Ascending aorta (tissue), 2 donors: ENCODE measurements at regions of chr10 and their contacts with region 1.

Region 1: DNA sequence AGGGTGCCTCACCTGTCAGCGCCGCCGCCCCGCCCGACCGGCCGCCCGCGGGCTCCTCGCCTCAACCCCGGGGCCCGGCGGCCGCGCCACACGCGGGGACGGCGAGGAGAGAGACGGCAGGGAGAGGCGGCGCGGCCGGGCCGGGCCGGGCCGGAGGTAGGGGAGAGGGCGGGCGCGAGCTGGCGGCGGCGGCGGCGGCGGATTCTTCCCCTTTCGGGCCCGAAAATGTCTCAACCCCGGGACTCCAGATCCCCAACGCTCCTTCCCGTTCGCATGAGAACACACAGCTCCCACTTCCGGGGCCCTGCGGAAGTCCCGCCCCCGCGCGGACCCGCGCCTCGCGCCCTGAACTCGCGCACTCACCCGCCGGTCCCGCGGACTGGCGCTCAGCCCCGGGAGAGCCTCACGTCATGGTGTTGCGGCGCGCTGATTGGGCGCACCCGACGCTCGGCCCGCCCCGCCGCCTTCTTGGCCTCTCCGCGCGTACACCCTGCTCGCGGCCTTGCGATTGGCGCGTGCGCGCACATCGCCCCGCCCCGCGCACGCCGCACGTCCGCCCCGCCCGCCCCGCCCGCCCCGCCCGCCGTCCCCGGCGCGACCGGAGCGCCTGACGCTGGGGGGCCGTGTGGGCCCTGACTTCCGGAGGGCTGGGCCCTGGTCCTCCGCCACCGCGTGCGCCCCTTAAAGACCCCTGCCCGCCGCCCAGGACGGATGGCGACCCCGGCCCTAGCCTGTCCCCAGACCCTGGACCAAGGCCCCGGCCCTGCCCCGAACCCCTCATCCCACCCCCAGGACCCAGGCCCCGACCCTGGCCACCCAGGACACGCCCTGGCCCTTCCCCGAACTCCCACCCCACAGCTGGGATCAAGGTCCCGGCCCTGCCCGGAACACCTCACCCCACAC is at the start of gene LARP4B:
- DNase-seq: peak; percentile 87 to 98
- H3K4me3 ChIP-seq: peak within 1 kb of the TSS; percentile 91 to 98
- H3K27ac ChIP-seq: peak within 1 kb of the TSS; percentile 94 to 99
- H3K4me1 ChIP-seq: peaks cover 11 to 26% of the 10 kb centered on the region in 2 donors
- H3K27me3 ChIP-seq: no peaks in the 10 kb centered on the region
- CTCF ChIP-seq: peak in 1 of 3 experiments; percentile 6
- total RNA-seq, gene LARP4B: 31.6 TPM

Region 2: DNA sequence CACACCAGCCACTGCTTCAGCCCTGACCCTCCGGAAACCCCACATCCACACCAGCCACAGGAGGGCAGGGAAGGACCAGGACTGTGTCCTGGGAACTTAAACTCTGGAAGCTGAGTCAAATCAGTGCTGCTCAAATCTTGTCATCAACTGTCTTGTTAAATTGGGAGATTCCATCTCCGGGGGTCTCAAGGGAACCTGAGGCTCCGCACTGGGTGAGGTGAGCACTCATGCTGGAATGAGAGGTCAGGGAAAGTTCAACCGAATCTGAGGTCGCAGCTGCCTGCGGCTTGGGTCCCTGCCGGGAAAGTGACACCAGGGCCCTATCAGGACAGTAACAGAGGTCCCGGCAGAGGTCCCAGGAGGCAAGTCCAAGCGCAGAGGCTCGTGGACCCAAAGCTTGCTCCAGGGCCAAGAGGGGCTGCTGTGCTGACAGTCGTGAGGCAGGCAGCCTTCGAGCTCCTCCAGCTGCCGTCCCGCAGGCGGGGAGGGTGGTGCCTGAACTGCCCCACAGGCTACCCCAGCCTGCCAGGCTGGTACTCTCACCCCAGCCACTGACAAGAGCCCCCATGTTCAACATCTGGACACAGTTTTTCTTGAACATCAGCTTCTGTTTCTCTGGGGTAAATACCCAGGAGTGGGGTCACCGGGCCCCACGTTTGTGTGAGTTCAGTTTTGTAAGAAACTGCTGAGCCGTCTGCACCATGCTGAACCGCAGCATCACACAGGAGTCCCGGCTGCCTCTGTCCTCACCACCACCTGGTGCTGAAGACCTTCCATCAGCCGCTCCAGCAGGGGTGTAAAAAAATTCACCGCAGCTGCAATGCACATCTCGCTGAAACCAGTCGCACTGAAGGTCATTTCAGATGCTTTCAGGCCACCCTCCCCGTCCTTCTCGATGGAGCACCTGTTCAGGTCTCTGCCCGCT is 343.2 kb before region 1 on chr10:
- intact Hi-C with region 1: no loop called
- DNase-seq: peak in 1 of 2 donors; percentile 41
- H3K4me3 ChIP-seq: no peak overlapping the region
- H3K27ac ChIP-seq: no peak overlapping the region
- H3K4me1 ChIP-seq: peaks cover 0 to 11% of the 10 kb centered on the region in 2 donors
- H3K27me3 ChIP-seq: no peaks in the 10 kb centered on the region
- CTCF ChIP-seq: peak in 1 of 3 experiments; percentile 33

Region 3: GRCh38 chr10:689433-690371 is 242.0 kb before region 1 on chr10 and contains the start of gene DIP2C:
- intact Hi-C with region 1: loop called (anchors 1 kb)
- DNase-seq: peak in 1 of 2 donors; percentile 83
- H3K4me3 ChIP-seq: peak within 1 kb of the TSS; percentile 67 to 89
- H3K27ac ChIP-seq: peak within 1 kb of the TSS; percentile 89 to 91
- H3K4me1 ChIP-seq: peaks cover 6 to 11% of the 10 kb centered on the region in 2 donors
- H3K27me3 ChIP-seq: no peaks in the 10 kb centered on the region
- CTCF ChIP-seq: no peak
- total RNA-seq, gene DIP2C: 14.7 TPM

Region 4: DNA sequence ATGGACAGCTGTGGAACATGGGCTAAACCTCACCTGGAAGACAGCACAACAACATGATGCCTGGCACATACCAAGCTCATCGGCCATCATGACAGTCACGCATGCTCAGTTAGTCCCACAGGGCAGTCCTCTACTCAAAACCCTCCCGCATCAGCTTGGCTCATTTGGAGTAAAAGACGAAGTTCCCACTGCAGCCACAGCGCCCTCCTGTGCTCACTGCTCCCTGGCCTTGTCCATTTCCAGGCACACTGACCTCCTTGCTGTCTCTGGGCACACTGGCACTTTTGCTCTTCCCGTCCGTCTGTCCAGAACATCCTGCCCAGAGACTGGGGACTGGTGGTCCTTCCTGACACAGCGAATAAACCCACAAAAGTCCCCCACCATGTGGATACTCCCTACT is 66.4 kb before region 1 on chr10:
- intact Hi-C with region 1: no loop called
- DNase-seq: no peak
- H3K4me3 ChIP-seq: no peak overlapping the region
- H3K27ac ChIP-seq: no peak overlapping the region
- H3K4me1 ChIP-seq: no peaks in the 10 kb centered on the region
- H3K27me3 ChIP-seq: no peaks in the 10 kb centered on the region
- CTCF ChIP-seq: no peak

Region 5: DNA sequence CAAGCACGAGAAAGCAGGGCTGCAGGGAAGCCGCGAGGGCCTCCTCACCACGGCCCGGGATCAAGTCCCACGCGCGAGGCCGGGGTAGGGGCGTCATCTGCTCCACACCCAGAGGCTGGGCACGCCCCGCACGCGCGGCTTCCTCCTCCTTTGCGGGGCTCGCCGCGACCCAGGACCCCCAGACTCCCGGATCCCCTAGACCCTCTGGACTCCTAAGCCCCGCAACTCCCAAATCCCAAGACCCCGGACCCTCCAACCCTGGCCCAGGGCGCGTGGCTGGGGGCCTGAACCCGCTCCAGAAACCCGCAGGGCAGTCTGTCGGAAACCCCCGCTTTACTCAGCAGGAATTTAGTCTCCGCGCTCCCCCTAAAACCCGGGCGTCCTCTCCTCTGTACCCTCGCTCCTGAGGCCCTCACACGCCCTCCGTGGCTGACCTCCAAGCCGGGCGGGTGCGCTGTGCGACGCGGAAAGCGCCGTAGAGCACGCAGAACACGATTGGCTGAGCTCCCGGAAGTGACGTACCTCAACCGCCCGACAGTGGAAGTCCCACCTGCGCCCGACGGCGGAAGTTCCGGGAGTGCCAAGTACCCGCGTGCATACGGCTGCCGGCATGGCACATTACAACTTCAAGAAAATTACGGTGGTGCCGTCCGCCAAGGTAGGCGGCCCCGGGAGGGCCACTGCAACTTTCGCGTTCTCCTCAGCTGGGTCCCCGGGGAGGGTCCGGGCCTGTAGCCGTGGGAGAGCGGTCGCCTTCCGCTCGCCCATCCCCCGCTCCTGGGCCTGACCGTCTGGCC is 56.4 kb after region 1 on chr10 and contains the start of gene GTPBP4:
- intact Hi-C with region 1: loop called (anchors 1 kb)
- DNase-seq: peak; percentile 84 to 98
- H3K4me3 ChIP-seq: peak within 1 kb of the TSS; percentile 88 to 94
- H3K27ac ChIP-seq: peak within 1 kb of the TSS; percentile 86 to 94
- H3K4me1 ChIP-seq: peaks cover 8 to 17% of the 10 kb centered on the region in 2 donors
- H3K27me3 ChIP-seq: no peaks in the 10 kb centered on the region
- CTCF ChIP-seq: peak in 1 of 3 experiments; percentile 13
- total RNA-seq, gene GTPBP4: 9.0 TPM

Region 6: DNA sequence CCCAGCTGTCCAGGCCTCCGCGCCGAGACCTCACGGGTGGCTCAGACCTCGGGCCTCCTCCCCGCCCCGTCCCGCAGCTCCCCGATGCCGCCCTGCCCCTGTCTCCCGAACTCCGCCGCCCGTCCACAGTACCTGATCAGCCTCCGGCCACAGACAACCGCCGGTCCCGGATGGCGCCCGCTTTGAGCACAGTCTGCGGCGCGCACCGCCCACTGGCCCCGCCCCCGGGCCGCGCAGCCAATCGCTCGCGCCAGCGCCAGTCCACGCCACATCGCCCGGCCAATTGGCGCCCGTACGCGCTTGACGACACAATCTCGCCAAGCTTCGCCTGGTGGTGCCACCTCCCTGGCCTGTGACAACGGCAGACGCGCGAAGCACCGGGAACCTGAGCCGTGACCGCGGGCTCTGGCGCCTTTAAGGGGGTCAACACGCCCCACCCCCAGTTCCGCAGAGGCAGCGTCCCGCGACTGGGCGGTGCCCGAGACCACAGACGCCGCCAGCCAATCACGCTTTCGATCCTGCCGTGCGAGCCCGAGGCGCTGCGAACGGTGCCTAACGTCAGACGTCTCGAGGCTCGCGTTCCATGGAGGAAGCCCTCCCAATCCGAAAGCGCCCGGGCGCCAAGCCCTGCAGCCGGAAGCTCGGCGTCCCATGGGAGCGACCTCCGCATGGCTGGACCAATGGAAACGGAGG is 117.2 kb after region 1 on chr10 and contains the start of gene IDI1:
- intact Hi-C with region 1: loop called (anchors 1 kb)
- DNase-seq: peak; percentile 91 to 99
- H3K4me3 ChIP-seq: peak within 1 kb of the TSS; percentile 86 to 87
- H3K27ac ChIP-seq: peak within 1 kb of the TSS; percentile 98 to 100
- H3K4me1 ChIP-seq: peaks cover 0 to 18% of the 10 kb centered on the region in 2 donors
- H3K27me3 ChIP-seq: no peaks in the 10 kb centered on the region
- CTCF ChIP-seq: no peak
- total RNA-seq, gene IDI1: 3.8 TPM